ENCODE measurements at regions of chr10 and their contacts with region 1.

Region 1: GRCh38 chr10:43689955-43690771 is 41.5 kb upstream of the ZNF32 start:
- DNase-seq: peak; percentile 96
- H3K4me3 Mint-ChIP-seq: peak overlapping the region; percentile 87
- H3K27ac Mint-ChIP-seq: peak overlapping the region; percentile 52
- H3K4me1 Mint-ChIP-seq: peaks cover 9% of the 10 kb centered on the region
- H3K27me3 Mint-ChIP-seq: peaks cover 33% of the 10 kb centered on the region

Region 2: GRCh38 chr10:44030143-44030542 is 340.0 kb after region 1 on chr10:
- intact Hi-C with region 1: loop called (anchors 1 kb)
- DNase-seq: peak; percentile 67
- H3K4me3 Mint-ChIP-seq: no peak overlapping the region
- H3K27ac Mint-ChIP-seq: no peak overlapping the region
- H3K4me1 Mint-ChIP-seq: no peaks in the 10 kb centered on the region
- H3K27me3 Mint-ChIP-seq: peaks cover 20% of the 10 kb centered on the region

Region 3: DNA sequence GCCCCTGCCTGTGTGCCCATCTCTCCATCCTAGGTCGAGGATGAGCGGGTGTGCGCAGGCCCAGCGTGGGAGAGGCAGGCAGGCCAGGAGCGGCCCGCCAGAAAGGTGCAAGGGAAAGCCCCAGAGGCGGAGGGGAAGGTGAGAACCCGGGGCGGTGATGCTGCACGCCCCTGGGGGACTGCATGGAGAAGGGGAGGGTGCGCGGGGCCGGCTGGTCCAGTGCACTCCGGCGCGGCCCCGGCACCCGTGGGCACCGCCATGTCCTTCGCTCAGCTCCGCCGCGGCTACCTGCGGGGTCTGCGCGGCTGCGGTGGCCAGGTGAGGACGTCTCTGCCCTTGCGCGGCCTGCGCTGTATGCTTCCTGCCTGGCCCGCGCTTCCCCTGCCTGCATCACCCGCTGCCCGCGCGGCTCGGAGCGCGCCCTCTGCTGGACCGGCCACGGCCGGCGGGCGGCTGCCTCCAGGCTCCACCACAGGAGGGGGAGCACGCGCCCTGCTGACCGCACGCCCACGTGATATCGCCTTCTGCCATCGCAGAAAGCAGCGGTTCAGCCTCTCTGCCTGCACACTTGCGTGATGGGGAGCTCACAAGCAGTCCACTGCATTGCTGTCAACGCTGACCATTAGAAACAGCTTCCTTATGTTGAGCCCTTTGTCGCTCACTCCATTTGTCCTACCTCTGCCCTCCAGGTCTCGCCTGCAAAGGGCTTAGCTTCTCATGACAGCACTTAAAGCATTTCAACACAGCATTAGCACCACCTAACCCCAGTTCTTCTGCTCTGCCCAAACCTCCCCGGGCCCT is 620.8 kb after region 1 on chr10:
- intact Hi-C with region 1: loop called (anchors 1 kb)
- DNase-seq: peak; percentile 91
- H3K4me3 Mint-ChIP-seq: peak overlapping the region; percentile 16
- H3K27ac Mint-ChIP-seq: no peak overlapping the region
- H3K4me1 Mint-ChIP-seq: peaks cover 4% of the 10 kb centered on the region
- H3K27me3 Mint-ChIP-seq: peaks cover 4% of the 10 kb centered on the region

Region 4: DNA sequence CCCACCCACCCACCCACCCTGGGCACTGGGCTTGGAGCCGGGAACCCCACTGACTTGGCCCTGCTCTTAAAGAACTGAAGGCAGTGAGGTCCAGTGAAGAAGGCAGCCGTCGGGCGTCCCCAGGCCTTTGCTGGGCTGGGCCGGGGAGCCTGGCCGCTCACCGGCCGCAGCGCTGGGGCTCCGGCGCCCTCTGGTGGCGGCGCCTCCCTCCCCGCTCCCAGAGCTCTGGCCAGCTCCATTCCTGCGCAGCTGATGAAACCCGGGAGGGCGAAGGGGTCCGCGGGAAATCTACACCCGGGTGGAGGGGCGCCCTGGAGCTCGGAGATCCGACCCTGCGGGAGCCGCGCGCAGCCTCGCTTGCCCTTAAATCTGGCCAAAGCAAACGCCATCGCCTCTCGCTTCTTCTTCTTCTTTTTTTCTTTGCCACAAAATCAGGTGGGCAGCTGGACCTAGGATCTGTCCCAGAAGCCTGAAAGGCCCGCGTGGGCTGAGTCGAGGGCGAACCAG is 696.4 kb after region 1 on chr10:
- intact Hi-C with region 1: loop called (anchors 5 kb)
- DNase-seq: peak; percentile 78
- H3K4me3 Mint-ChIP-seq: no peak overlapping the region
- H3K27ac Mint-ChIP-seq: no peak overlapping the region
- H3K4me1 Mint-ChIP-seq: peaks cover 2% of the 10 kb centered on the region
- H3K27me3 Mint-ChIP-seq: peaks cover 29% of the 10 kb centered on the region